ENCODE measurements at regions of chr16 and their contacts with region 1.

Region 1: GRCh38 chr16:76278980-76279379 is 1.8 kb downstream of the CNTNAP4 start:
- DNase-seq: peak; percentile 13
- ATAC-seq: peak; percentile 79
- H3K4me3 ChIP-seq: no peak overlapping the region
- H3K27ac ChIP-seq: no peak overlapping the region
- H3K4me1 ChIP-seq: no peaks in the 10 kb centered on the region
- H3K27me3 ChIP-seq: no peaks in the 10 kb centered on the region
- CTCF ChIP-seq: peak; percentile 59
- EP300 ChIP-seq: no peak
- POLR2A ChIP-seq: no peak
- RAD21 ChIP-seq: 0 out of 2 replicates have a peak, but pooled peaks have one; percentile 32

Region 2: DNA sequence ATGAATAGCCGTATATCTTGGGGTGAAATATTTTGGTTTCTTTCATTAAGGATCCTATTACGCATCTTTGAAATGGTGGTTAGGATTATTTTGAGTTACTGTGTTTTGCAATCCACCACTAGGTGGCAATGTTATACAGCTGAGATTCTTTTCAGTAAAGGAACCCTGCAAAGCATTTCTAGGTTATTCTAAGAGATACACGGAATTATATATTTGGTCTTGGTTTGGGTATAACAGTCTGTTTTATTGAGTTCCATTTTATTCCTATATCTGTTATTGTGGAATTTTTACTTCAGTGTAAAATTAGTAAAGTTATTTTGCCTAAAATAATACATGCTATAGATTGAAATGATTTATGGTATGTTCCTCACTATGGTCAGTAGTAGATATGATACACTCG is 489.7 kb before region 1 on chr16:
- CTCF ChIA-PET with region 1: no interaction called
- POLR2A ChIA-PET with region 1: no interaction called
- in situ Hi-C with region 1: no loop called
- intact Hi-C with region 1: loop called (anchors 2 kb)
- DNase-seq: peak; percentile 53
- ATAC-seq: peak; percentile 82
- H3K4me3 ChIP-seq: no peak overlapping the region
- H3K27ac ChIP-seq: no peak overlapping the region
- H3K4me1 ChIP-seq: no peaks in the 10 kb centered on the region
- H3K27me3 ChIP-seq: no peaks in the 10 kb centered on the region
- CTCF ChIP-seq: peak; percentile 84
- EP300 ChIP-seq: no peak
- POLR2A ChIP-seq: no peak
- RAD21 ChIP-seq: peak; percentile 52; the same call in 1 of the 2 replicates

Region 3: GRCh38 chr16:76235025-76235815 is 43.8 kb before region 1 on chr16:
- CTCF ChIA-PET with region 1: no interaction called
- POLR2A ChIA-PET with region 1: no interaction called
- in situ Hi-C with region 1: no loop called
- intact Hi-C with region 1: no loop called
- DNase-seq: no peak
- ATAC-seq: no peak
- H3K4me3 ChIP-seq: no peak overlapping the region
- H3K27ac ChIP-seq: no peak overlapping the region
- H3K4me1 ChIP-seq: no peaks in the 10 kb centered on the region
- H3K27me3 ChIP-seq: no peaks in the 10 kb centered on the region
- CTCF ChIP-seq: no peak
- EP300 ChIP-seq: no peak
- POLR2A ChIP-seq: no peak
- RAD21 ChIP-seq: no peak

Region 4: DNA sequence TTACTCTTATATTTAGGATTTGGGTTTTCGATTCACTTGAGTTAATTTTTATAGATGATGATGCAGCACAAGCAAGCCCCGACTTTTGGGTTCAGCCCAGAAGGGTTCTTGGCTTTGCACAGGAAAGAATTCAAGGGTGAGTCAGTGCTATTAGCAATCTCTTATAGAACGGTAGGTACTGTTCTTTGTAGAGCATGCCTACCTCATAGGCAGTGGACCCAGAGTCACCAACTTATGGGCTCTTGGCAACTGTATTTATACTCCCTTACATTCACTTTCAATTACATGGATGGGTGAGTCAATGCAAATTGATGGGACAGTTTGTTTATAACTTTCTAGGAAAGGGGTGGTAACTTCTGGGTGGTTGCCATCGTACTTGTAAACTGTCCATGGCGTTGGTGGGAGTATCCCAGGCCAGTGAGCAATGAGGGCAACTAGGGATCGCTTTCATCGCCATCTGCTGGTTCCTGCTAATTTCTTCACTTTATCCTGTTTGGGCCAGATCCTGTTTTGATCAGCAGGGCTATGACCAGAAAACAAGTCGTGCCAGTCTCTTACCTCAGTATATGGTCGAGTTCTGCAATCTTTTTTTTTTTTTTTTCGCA is 360.8 kb after region 1 on chr16:
- CTCF ChIA-PET with region 1: interaction called, 3 read pairs
- POLR2A ChIA-PET with region 1: no interaction called
- in situ Hi-C with region 1: no loop called
- intact Hi-C with region 1: loop called (anchors 1 kb)
- DNase-seq: peak; percentile 47
- ATAC-seq: peak; percentile 94
- H3K4me3 ChIP-seq: no peak overlapping the region
- H3K27ac ChIP-seq: no peak overlapping the region
- H3K4me1 ChIP-seq: no peaks in the 10 kb centered on the region
- H3K27me3 ChIP-seq: no peaks in the 10 kb centered on the region
- CTCF ChIP-seq: peak; percentile 69
- EP300 ChIP-seq: no peak
- POLR2A ChIP-seq: no peak
- RAD21 ChIP-seq: no peak

Measured in HepG2 (cell line).